Activated B cell treated with CpG ODN at 0.5 μM for 24 hours (primary cell): ENCODE measurements at regions of chr20 and their contacts with region 1.

Region 1: DNA sequence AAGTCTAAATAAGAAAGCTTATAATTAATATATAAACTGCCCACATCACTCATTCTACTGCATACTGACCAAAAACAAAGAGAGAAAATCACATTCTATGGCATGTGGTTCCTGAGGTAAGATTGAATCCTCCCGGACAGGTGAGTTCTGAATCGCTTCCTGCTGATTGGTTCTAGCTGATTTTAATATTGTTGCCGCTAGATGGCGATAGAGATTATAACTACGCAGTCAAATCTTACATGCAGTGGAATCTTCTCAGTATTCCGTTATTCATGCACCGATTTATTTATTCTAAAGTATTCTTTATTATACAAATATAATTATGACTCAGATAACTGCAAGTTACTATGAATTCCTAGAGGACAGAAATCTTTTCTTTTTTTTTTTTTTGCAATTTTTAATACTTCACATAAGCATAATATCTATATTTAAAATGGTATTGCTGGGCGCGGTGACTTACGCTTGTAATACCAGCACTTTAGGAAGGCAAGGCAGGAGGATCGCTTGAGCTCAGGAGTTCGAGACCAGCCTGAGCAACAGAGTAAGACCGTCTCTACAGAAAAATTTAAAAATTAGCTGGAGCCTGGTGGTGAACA is 24.2 kb upstream of the TMX4 start:
- DNase-seq: no peak
- ATAC-seq: peak; percentile 70
- H3K4me3 Mint-ChIP-seq: no peak overlapping the region
- H3K27ac Mint-ChIP-seq: no peak overlapping the region
- H3K4me1 Mint-ChIP-seq: peaks cover 1% of the 10 kb centered on the region
- H3K27me3 Mint-ChIP-seq: peaks cover 6% of the 10 kb centered on the region
- CTCF ChIP-seq: peak; percentile 68

Region 2: GRCh38 chr20:8131598-8132483 is 88.1 kb after region 1 on chr20 and contains the start of gene PLCB1:
- CTCF ChIA-PET with region 1: no interaction called
- POLR2A ChIA-PET with region 1: no interaction called
- intact Hi-C with region 1: no loop called
- DNase-seq: peak; percentile 36
- ATAC-seq: peak; percentile 92
- H3K4me3 Mint-ChIP-seq: peak within 1 kb of the TSS; percentile 69
- H3K27ac Mint-ChIP-seq: no peak within 1 kb of the TSS
- H3K4me1 Mint-ChIP-seq: peaks cover 13% of the 10 kb centered on the region
- H3K27me3 Mint-ChIP-seq: peaks cover 34% of the 10 kb centered on the region
- CTCF ChIP-seq: no peak
- total RNA-seq, gene PLCB1: 0.29 and 0.86 TPM in 2 replicates

Region 3: DNA sequence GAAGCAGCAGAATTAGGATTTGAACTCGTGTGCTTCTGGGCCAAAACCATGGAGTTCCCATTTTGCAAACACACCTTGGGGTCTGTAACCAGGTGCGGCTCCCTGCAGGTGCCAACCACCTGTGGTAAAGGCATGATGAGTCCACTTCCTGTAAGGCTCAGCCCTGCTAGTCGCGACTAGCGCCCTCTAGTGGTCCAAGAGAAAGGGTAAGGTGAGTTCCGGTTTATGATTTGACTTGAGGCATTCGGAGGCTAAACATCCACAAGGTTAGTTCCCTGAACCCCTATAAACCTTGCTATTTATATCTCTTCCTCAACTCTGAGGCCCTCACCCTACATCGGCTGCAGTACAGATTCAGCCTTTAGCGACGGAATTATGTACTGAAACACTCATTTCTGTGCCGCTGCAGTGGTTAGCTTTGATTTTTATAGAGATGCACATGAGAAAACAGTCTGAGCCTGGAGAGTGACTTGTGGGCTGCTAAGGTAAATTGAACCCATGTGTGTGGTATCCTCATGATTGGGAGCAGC is 261.7 kb after region 1 on chr20:
- CTCF ChIA-PET with region 1: interaction called, 3 read pairs
- POLR2A ChIA-PET with region 1: no interaction called
- intact Hi-C with region 1: loop called (anchors 10 kb)
- DNase-seq: no peak
- ATAC-seq: no peak
- H3K4me3 Mint-ChIP-seq: no peak overlapping the region
- H3K27ac Mint-ChIP-seq: no peak overlapping the region
- H3K4me1 Mint-ChIP-seq: no peaks in the 10 kb centered on the region
- H3K27me3 Mint-ChIP-seq: no peaks in the 10 kb centered on the region
- CTCF ChIP-seq: no peak

Region 4: GRCh38 chr20:8389381-8390036 is 345.7 kb after region 1 on chr20:
- CTCF ChIA-PET with region 1: interaction called, 20 read pairs
- POLR2A ChIA-PET with region 1: no interaction called
- intact Hi-C with region 1: loop called (anchors 1 kb)
- DNase-seq: no peak
- ATAC-seq: no peak
- H3K4me3 Mint-ChIP-seq: no peak overlapping the region
- H3K27ac Mint-ChIP-seq: no peak overlapping the region
- H3K4me1 Mint-ChIP-seq: no peaks in the 10 kb centered on the region
- H3K27me3 Mint-ChIP-seq: no peaks in the 10 kb centered on the region
- CTCF ChIP-seq: peak; percentile 39

Region 5: DNA sequence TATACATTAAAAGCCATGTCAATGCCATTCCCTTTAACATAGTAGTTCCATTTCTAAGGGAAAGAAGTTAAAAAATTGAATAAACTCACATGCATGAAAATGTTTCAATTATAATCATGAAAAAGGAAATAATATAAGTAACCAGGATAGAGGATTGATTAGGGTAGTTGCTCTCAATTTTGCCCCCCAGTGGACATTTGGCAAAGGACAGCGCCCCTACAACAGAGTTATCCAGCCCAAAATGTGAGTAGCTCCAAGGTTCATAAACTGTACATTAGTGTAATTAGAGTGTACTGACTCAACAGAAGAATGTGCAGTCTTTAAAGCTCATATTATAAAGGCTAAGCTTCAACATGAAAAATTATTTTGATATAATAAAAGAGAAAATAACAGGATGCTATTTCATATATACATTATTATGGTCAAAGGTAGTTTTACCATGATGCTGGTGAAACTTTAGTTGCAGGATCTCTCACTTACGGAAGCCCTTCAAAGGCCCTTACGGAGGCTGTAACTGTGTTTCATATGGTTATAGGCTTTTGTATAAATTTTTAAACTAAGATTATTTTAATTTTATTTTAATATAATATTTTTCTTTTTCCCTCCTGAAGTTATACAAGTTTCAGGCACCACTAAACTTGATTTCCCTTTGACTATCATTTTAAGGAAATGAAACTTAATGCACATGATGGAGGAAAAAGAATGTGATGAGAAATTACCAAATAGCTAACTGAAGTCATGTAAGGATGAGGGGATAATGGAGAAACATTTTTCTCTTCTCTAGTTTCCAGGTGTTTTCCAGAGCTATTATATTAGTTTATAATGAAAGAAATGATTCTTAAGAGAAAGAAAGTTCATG is 491.8 kb after region 1 on chr20:
- CTCF ChIA-PET with region 1: no interaction called
- POLR2A ChIA-PET with region 1: no interaction called
- intact Hi-C with region 1: loop called (anchors 10 kb)
- DNase-seq: no peak
- ATAC-seq: no peak
- H3K4me3 Mint-ChIP-seq: no peak overlapping the region
- H3K27ac Mint-ChIP-seq: no peak overlapping the region
- H3K4me1 Mint-ChIP-seq: peaks cover 33% of the 10 kb centered on the region
- H3K27me3 Mint-ChIP-seq: no peaks in the 10 kb centered on the region
- CTCF ChIP-seq: no peak